MCF 10A (cell line): ENCODE measurements at regions of chr11 and their contacts with region 1.

Region 1: GRCh38 chr11:72024069-72024754 is 25.5 kb downstream of the IL18BP start:
- DNase-seq: no peak
- H3K4me3 Mint-ChIP-seq: no peak overlapping the region
- H3K27ac Mint-ChIP-seq: peak overlapping the region; percentile 19
- H3K4me1 Mint-ChIP-seq: peaks cover 4% of the 10 kb centered on the region
- H3K27me3 Mint-ChIP-seq: no peaks in the 10 kb centered on the region
- CTCF ChIP-seq: no peak

Region 2: GRCh38 chr11:72112321-72113219 is 88.4 kb after region 1 on chr11 and contains the start of gene ANAPC15:
- CTCF ChIA-PET with region 1: interaction called, 5 read pairs
- POLR2A ChIA-PET with region 1: interaction called, 11 read pairs
- intact Hi-C with region 1: no loop called
- DNase-seq: peak; percentile 100
- H3K4me3 Mint-ChIP-seq: peak within 1 kb of the TSS; percentile 98
- H3K27ac Mint-ChIP-seq: peak within 1 kb of the TSS; percentile 100
- H3K4me1 Mint-ChIP-seq: peaks cover 20% of the 10 kb centered on the region
- H3K27me3 Mint-ChIP-seq: no peaks in the 10 kb centered on the region
- CTCF ChIP-seq: no peak
- total RNA-seq, gene ANAPC15: 52.2 and 63.6 TPM in 2 replicates

Region 3: GRCh38 chr11:72238040-72238450 is 213.8 kb after region 1 on chr11:
- CTCF ChIA-PET with region 1: interaction called, 3 read pairs
- POLR2A ChIA-PET with region 1: interaction called, 3 read pairs
- intact Hi-C with region 1: loop called (anchors 2 kb)
- DNase-seq: peak; percentile 60
- H3K4me3 Mint-ChIP-seq: no peak overlapping the region
- H3K27ac Mint-ChIP-seq: no peak overlapping the region
- H3K4me1 Mint-ChIP-seq: peaks cover 9% of the 10 kb centered on the region
- H3K27me3 Mint-ChIP-seq: no peaks in the 10 kb centered on the region
- CTCF ChIP-seq: peak; percentile 60

Region 4: DNA sequence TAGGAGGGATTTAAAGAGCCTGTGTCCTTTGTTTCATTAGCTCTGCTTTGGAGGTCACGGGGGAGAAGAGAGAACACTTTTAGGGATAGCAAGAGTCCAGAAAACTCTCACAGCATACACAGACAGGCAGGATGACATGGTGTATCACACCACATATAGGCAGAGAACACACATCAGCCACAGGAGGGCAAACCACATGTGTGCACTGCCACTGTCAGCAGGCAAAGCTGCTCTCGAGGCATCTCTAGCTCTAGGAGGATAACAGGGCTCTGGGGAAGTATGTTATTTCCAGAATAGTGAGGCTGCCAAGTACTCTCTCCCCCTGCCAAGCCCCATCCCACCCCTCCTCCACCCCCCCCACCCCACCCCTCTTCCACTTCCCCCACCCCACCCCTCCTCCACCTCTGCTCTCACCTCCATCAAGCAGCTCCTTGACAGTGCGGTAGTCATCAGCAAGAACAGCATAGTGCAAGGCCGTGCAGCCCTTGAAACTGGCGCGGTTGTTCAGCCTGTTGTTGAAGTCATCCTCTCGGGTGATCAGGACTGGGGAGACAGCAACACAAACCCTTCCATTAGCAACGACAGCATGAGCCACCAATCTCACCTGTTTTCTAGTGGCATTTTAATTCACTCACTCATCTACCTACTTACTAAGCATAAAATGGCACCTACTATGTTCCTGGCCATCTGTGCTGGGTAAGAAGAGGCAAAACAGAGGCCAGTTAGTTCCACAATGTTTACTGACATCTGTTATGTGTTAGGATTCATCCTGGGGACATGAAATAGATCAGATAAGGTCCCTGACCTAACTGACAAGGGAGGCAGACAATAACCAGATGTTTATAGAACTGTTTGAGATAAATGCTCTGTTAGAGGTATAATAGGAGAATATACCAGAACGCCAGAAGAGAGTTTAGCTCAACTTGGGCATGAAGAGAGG is 334.5 kb after region 1 on chr11:
- CTCF ChIA-PET with region 1: no interaction called
- POLR2A ChIA-PET with region 1: no interaction called
- intact Hi-C with region 1: no loop called
- DNase-seq: no peak
- H3K4me3 Mint-ChIP-seq: no peak overlapping the region
- H3K27ac Mint-ChIP-seq: no peak overlapping the region
- H3K4me1 Mint-ChIP-seq: peaks cover 9% of the 10 kb centered on the region
- H3K27me3 Mint-ChIP-seq: no peaks in the 10 kb centered on the region
- CTCF ChIP-seq: no peak